ENCODE measurements at regions of chr12 and their contacts with region 1.

Region 1: GRCh38 chr12:47904713-47905310 is at the start of gene VDR:
- DNase-seq: peak; percentile 59
- ATAC-seq: peak; percentile 83
- H3K4me3 Mint-ChIP-seq: peak within 1 kb of the TSS; percentile 87
- H3K27ac Mint-ChIP-seq: peak within 1 kb of the TSS; percentile 41
- H3K4me1 Mint-ChIP-seq: peaks cover 23% of the 10 kb centered on the region
- H3K27me3 Mint-ChIP-seq: peaks cover 26% of the 10 kb centered on the region
- CTCF ChIP-seq: no peak
- total RNA-seq, gene VDR: 0.64 and 0.86 TPM in 2 replicates

Region 2: DNA sequence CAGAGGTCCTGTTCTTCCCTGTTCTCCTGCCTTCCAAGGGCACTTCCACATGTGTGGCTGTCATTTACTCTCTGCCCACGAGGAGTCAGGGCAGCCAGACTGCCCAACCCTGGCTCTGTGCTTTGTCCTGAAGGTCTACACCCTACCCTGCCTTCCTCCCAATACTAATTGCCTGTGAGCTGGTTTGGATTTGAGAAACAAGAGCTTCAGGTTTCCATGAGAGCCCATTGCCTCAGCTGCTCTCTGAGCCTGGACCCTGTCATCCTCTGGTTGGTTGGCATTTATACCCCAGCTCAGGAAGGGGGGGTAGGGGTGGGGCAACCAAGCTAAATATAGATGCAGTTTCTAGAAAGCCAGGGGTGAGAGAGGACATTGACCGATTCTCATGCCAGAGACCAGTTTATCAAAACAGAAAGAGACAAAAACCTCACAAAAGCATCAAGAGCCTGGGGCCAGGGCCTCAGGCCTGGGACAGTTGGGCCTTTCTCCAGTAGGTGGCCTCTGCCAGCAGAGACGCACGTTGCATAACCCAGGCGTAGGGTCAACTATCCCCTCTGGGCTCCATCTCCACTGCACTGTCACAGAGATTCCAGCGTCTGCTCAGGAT is 34.5 kb before region 1 on chr12:
- CTCF ChIA-PET with region 1: interaction called, 3 read pairs
- POLR2A ChIA-PET with region 1: no interaction called
- intact Hi-C with region 1: loop called (anchors 5 kb)
- DNase-seq: no peak
- ATAC-seq: peak; percentile 34
- H3K4me3 Mint-ChIP-seq: no peak overlapping the region
- H3K27ac Mint-ChIP-seq: no peak overlapping the region
- H3K4me1 Mint-ChIP-seq: peaks cover 43% of the 10 kb centered on the region
- H3K27me3 Mint-ChIP-seq: no peaks in the 10 kb centered on the region
- CTCF ChIP-seq: no peak

Region 3: GRCh38 chr12:47938093-47938492 is 33.3 kb after region 1 on chr12:
- CTCF ChIA-PET with region 1: no interaction called
- POLR2A ChIA-PET with region 1: no interaction called
- intact Hi-C with region 1: no loop called
- DNase-seq: no peak
- ATAC-seq: no peak
- H3K4me3 Mint-ChIP-seq: no peak overlapping the region
- H3K27ac Mint-ChIP-seq: no peak overlapping the region
- H3K4me1 Mint-ChIP-seq: no peaks in the 10 kb centered on the region
- H3K27me3 Mint-ChIP-seq: peaks cover 12% of the 10 kb centered on the region
- CTCF ChIP-seq: no peak

Region 4: GRCh38 chr12:47949441-47950308 is 44.9 kb after region 1 on chr12:
- CTCF ChIA-PET with region 1: no interaction called
- POLR2A ChIA-PET with region 1: no interaction called
- intact Hi-C with region 1: loop called (anchors 1 kb)
- DNase-seq: no peak
- ATAC-seq: peak; percentile 69
- H3K4me3 Mint-ChIP-seq: no peak overlapping the region
- H3K27ac Mint-ChIP-seq: no peak overlapping the region
- H3K4me1 Mint-ChIP-seq: no peaks in the 10 kb centered on the region
- H3K27me3 Mint-ChIP-seq: peaks cover 29% of the 10 kb centered on the region
- CTCF ChIP-seq: no peak

Region 5: GRCh38 chr12:48119078-48119833 is 214.4 kb after region 1 on chr12 and contains the start of gene PFKM:
- CTCF ChIA-PET with region 1: no interaction called
- POLR2A ChIA-PET with region 1: no interaction called
- intact Hi-C with region 1: no loop called
- DNase-seq: peak; percentile 43
- ATAC-seq: peak; percentile 97
- H3K4me3 Mint-ChIP-seq: peak within 1 kb of the TSS; percentile 99
- H3K27ac Mint-ChIP-seq: peak within 1 kb of the TSS; percentile 87
- H3K4me1 Mint-ChIP-seq: peaks cover 21% of the 10 kb centered on the region
- H3K27me3 Mint-ChIP-seq: no peaks in the 10 kb centered on the region
- CTCF ChIP-seq: no peak
- total RNA-seq, gene PFKM: 44.7 and 49.2 TPM in 2 replicates